ENCODE measurements at regions of chr21 and their contacts with region 1.

Region 1: DNA sequence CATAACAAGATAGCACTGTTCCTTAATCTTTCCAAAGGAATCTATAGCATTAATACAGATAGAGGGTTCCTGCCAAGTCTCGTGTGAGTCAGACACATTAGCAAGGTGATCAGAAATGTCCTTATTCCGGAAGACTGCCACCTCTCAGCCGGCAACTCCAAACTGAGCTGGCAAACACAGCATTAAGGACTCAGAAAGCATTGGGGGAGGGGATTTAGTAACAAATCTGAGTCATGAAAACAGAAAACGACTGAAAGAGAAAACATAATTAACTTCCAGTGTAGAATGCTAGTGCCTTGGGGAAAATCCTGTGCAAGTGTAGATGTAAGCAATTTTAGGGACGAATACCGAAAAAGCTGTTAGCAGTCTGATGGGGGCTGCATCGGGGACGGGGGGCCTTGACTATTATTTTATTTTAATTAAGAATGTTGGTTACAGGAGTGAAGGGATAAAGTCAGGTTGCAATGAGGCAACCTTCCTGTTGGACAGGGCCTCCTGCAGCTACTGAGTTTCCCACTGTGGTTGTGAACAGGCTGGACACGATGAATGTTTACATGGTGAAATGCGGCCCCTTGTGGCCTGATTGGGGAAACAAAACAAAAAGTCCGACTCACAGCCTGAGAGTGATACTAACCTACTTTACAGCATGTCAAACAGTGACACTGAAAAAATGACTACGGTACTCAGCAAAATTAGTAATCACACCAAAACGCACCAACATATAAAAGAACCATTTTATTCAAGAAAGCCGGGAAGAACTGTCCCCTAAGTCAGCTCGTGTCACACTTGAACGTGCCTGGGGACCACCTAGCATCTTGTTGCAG is 20.7 kb downstream of the MIS18A start:
- DNase-seq: peak; percentile 77
- CTCF ChIP-seq: peak; percentile 60

Region 2: DNA sequence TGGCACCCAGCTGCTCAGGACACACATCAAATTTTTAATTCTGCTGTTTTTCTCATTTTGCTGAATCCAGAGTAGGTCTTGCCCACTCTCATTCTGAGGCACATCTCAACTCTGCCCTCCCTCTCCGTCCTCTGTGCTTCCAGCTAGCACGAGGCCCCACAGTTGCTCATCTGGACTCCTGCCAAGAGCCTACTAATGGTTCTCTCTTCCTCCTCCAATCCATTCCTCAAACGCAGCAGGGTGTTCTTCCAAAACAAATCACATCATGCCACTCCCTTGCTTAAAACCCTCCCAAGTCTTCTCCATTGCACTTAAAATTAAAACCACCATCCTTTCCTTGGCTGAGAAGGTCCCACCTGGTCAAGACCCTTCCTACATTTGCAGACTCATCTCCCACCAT is 476.4 kb before region 1 on chr21:
- in situ Hi-C with region 1: loop called (anchors 25 kb)
- DNase-seq: no peak
- CTCF ChIP-seq: no peak

Region 3: DNA sequence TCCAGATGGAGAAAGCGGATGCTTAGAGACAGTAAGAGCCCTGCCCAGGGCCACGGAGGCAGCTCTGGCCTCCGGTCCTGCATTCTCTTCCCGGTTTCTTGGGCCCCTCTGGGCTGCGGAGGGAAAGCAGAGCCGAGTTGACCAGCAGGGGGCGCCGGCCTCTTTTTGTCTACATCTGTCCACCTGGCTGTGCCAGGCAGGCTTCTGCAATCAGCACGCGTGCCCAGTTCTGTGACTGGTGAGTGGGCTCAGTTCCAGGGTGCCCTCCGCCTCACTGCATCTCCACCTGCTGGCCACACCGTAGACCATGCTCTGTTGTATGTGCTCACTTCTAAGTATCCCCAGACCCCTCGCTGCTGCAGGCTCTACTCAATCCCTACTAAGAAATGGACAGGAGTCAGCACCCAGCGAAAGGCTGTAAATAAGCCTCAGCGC is 392.1 kb before region 1 on chr21:
- in situ Hi-C with region 1: loop called (anchors 10 kb)
- DNase-seq: peak; percentile 71
- CTCF ChIP-seq: peak; percentile 67

Measured in GM13976 (cell line).